GM18951 (cell line): ENCODE measurements at regions of chr5 and their contacts with region 1.

Region 1: GRCh38 chr5:14351845-14352712 is 208.9 kb downstream of the TRIO start:
- POLR2A ChIP-seq: no peak

Region 2: DNA sequence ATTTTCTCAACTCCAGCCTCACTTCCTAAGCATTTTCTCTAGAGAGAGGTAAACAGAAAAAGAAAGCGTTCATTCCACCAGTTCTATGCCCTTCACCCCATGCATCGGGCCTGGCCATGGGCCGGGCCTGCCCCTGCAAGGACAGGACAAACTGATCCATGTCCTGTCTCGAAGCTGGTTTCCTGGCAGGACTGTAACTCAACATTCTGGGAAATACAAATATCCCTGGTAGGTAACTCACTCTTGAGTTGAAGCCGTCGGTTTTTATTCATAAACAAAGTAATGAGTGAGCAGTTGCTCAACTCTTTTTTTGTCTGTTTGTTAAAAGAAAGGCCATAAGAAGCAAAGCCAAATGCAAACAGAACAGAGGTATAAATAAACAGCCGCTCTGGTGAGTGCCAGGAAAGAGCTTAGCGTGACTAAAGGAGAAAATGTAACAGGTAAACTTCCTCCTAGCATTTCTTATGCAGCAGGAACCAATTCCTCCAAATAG is 343.2 kb before region 1 on chr5:
- in situ Hi-C with region 1: loop called (anchors 10 kb)
- POLR2A ChIP-seq: no peak

Region 3: GRCh38 chr5:14305045-14305444 is 47.0 kb before region 1 on chr5:
- in situ Hi-C with region 1: no loop called
- POLR2A ChIP-seq: no peak